Breast epithelium (tissue), 4 donors: ENCODE measurements at regions of chr18 and their contacts with region 1.

Region 1: GRCh38 chr18:21820035-21820810 is 79.6 kb downstream of the MIB1 start:
- DNase-seq: no peak
- H3K4me3 ChIP-seq: no peak overlapping the region
- H3K27ac ChIP-seq: no peak overlapping the region
- H3K4me1 ChIP-seq: no peaks in the 10 kb centered on the region
- H3K27me3 ChIP-seq: no peaks in the 10 kb centered on the region
- CTCF ChIP-seq: peak in 1 of 3 donors; percentile 41
- POLR2A ChIP-seq: no peak

Region 2: GRCh38 chr18:21270453-21270852 is 549.8 kb before region 1 on chr18:
- intact Hi-C with region 1: no loop called
- DNase-seq: no peak
- H3K4me3 ChIP-seq: no peak overlapping the region
- H3K27ac ChIP-seq: no peak overlapping the region
- H3K4me1 ChIP-seq: no peaks in the 10 kb centered on the region
- H3K27me3 ChIP-seq: no peaks in the 10 kb centered on the region
- CTCF ChIP-seq: no peak
- POLR2A ChIP-seq: no peak

Region 3: DNA sequence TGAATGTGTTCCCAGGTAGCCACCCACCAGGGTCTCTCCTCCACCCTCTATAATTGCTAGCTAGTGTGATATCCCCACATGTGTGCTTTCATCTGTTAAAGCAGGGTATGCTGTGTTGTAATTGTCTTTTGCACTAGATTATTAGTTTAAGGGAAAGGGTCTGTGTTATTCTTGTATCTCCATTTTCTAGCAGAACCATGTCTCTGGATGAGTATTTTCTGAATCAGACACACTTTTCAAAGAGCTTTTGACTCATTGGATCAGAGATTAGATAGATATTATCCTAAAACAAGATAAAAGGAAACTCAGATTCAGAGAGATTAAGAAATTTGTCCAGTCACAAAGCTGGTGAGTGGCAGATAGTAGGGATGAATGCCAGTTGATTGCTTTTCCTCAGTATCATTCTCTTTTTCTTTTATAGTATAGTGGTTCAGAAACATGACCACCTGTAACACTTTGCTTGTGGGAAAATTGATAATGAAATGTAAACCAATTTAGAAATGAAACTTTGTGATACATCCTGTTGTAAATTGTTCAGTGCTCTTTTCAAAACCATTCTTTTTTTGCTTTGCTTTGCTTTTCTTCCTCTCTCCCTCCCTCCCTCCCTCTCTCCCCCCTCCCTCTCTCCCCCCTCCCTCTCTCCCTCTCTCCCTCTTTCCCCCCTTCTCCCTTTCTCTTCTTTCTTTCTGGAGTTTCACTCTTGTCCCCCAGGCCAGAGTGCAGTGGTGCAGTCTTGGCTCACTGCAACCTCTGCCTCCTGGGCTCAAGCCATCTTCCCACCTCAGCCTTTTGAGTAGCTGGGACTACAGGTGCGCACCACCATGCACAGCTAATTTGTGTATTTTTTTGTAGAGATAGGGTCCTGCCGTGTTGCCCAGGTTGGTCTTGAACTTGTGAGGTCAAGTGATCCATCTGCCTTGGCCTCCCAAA is 72.2 kb before region 1 on chr18:
- intact Hi-C with region 1: loop called (anchors 2 kb)
- DNase-seq: no peak
- H3K4me3 ChIP-seq: no peak overlapping the region
- H3K27ac ChIP-seq: peak overlapping the region in 1 of 2 donors; percentile 11
- H3K4me1 ChIP-seq: peaks cover 0 to 6% of the 10 kb centered on the region in 2 donors
- H3K27me3 ChIP-seq: no peaks in the 10 kb centered on the region
- CTCF ChIP-seq: no peak
- POLR2A ChIP-seq: no peak

Region 4: GRCh38 chr18:21857871-21858270 is 37.6 kb after region 1 on chr18:
- intact Hi-C with region 1: no loop called
- DNase-seq: no peak
- H3K4me3 ChIP-seq: no peak overlapping the region
- H3K27ac ChIP-seq: no peak overlapping the region
- H3K4me1 ChIP-seq: no peaks in the 10 kb centered on the region
- H3K27me3 ChIP-seq: no peaks in the 10 kb centered on the region
- CTCF ChIP-seq: no peak
- POLR2A ChIP-seq: no peak

Region 5: DNA sequence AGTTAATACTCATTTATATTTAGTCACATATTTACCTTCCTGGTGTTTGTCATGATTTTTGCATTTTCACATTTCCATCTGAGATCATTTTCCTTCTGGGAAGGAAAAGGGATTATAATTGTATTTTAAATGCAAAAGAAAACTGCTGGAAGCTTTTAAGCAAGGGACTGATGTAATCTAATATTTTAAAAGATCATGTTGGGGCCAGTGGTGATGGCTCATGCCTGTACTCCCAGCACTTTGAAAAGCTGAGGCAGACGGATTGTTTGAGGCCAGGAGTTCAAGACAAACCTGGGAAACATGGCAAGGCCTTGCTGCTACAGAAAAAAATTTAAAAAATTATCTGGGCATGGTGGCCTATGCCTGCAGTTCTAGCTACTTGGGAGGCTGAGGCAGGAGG is 69.3 kb after region 1 on chr18:
- intact Hi-C with region 1: no loop called
- DNase-seq: no peak
- H3K4me3 ChIP-seq: no peak overlapping the region
- H3K27ac ChIP-seq: no peak overlapping the region
- H3K4me1 ChIP-seq: no peaks in the 10 kb centered on the region
- H3K27me3 ChIP-seq: no peaks in the 10 kb centered on the region
- CTCF ChIP-seq: no peak
- POLR2A ChIP-seq: no peak

Region 6: GRCh38 chr18:22494771-22495170 is 674.5 kb after region 1 on chr18:
- intact Hi-C with region 1: no loop called
- DNase-seq: no peak
- H3K4me3 ChIP-seq: no peak overlapping the region
- H3K27ac ChIP-seq: no peak overlapping the region
- H3K4me1 ChIP-seq: no peaks in the 10 kb centered on the region
- H3K27me3 ChIP-seq: no peaks in the 10 kb centered on the region
- CTCF ChIP-seq: no peak
- POLR2A ChIP-seq: no peak